B cell (primary cell): ENCODE measurements at regions of chr14 and their contacts with region 1.

Region 1: GRCh38 chr14:23478111-23478759 is 8.7 kb downstream of the NGDN start:
- DNase-seq: peak; percentile 79
- ATAC-seq: peak; percentile 73
- H3K4me3 ChIP-seq: no peak overlapping the region
- H3K4me3 Mint-ChIP-seq: no peak overlapping the region
- H3K27ac ChIP-seq: peak overlapping the region in 1 of 2 donors; percentile 4
- H3K27ac Mint-ChIP-seq: no peak overlapping the region
- H3K4me1 ChIP-seq: no peaks in the 10 kb centered on the region
- H3K4me1 Mint-ChIP-seq: no peaks in the 10 kb centered on the region
- H3K27me3 ChIP-seq: no peaks in the 10 kb centered on the region
- H3K27me3 Mint-ChIP-seq: no peaks in the 10 kb centered on the region
- CTCF ChIP-seq: peak; percentile 81

Region 2: DNA sequence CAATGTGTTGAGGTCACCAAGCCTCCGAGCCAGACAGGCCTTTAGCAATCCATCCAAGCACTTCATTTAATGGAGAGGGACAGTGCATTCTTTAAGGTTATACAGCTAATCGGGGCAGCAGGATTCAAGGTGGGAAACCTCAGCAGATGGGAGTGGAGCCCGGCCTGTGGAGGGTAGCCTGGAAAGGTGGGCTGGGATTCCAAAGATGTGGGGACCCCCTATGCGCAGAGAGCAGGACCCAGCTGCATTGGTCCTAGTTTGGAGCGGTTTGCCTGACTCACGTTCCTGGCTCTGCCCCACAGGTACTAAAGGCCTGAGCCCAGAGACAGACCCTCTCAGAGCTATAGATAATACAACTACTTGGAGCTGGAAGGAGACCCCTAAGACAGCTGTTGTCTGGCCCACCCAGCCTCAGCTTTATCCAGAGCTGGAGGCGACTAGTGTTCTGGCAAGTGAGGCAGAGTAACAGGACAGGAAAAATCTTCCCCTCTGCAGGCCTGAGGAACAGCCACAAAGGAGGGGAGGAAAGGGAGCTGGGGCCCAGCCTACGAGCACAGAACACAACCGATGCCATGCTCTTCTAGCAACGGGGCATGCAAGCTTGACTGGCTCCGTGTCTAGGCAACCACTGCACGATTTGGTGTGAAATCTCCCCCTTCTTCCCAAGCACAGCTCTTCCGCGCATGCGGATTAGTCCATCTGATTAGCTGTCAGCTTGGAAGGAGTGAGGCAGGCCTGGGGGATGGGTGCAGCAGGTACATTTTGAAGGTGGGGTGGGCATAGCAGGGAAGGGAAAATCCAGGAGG is 41.7 kb before region 1 on chr14:
- CTCF ChIA-PET with region 1: no interaction called
- POLR2A ChIA-PET with region 1: no interaction called
- intact Hi-C with region 1: no loop called
- DNase-seq: no peak
- ATAC-seq: no peak
- H3K4me3 ChIP-seq: no peak overlapping the region
- H3K4me3 Mint-ChIP-seq: no peak overlapping the region
- H3K27ac ChIP-seq: no peak overlapping the region
- H3K27ac Mint-ChIP-seq: no peak overlapping the region
- H3K4me1 ChIP-seq: no peaks in the 10 kb centered on the region
- H3K4me1 Mint-ChIP-seq: no peaks in the 10 kb centered on the region
- H3K27me3 ChIP-seq: peaks cover 0 to 3% (median under 1%) of the 10 kb centered on the region in 4 experiments
- H3K27me3 Mint-ChIP-seq: peaks cover 33% of the 10 kb centered on the region
- CTCF ChIP-seq: no peak

Region 3: DNA sequence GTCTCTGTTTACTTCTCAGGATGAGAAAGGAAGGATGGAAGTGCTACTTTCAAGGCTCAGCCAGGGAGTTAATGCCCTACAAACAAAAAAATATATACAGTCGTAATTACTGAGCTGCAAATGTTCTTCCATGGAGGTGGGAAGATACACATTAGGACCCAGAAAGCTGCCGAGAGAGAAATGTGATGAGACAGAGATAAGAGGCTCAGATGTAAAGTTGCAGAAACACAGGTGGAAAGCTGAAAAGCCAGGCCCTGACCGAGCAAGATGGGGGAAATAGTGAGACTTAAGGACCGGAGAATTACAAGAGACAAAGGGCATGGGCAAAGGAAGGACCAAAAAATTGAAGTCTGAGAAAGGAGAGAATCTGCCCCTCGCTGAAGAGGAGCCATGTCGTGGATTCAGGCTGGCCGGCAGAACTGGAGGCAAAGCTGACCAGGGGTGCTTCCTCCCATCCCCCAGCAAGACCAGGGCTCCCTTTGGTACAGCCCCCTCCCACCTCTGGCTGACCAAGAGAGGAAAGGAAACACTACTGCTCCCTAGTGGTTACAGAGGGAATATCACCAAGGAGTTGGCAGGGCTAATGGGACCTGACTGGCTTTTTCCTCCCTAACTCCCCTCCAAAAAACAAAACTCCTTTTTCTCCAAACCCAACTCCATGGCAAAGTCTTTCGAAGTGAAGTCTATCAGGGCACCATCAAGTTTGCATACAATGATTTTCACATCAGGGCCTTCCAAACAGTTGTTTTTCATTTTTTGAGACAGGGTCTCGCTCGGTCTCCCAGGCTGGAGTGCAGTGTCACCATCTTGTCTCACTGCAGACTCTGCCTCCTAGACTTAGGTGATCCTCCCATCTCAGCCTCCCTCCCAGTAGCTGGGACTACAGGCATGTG is 61.3 kb after region 1 on chr14:
- CTCF ChIA-PET with region 1: interaction called, 23 read pairs
- POLR2A ChIA-PET with region 1: no interaction called
- intact Hi-C with region 1: no loop called
- DNase-seq: peak; percentile 55
- ATAC-seq: peak; percentile 74
- H3K4me3 ChIP-seq: no peak overlapping the region
- H3K4me3 Mint-ChIP-seq: no peak overlapping the region
- H3K27ac ChIP-seq: no peak overlapping the region
- H3K27ac Mint-ChIP-seq: no peak overlapping the region
- H3K4me1 ChIP-seq: no peaks in the 10 kb centered on the region
- H3K4me1 Mint-ChIP-seq: no peaks in the 10 kb centered on the region
- H3K27me3 ChIP-seq: peaks cover 0 to 5% (median 0%) of the 10 kb centered on the region in 4 experiments
- H3K27me3 Mint-ChIP-seq: peaks cover 3% of the 10 kb centered on the region
- CTCF ChIP-seq: peak; percentile 78

Region 4: GRCh38 chr14:23555882-23556699 is 77.9 kb after region 1 on chr14 and contains the start of gene THTPA:
- CTCF ChIA-PET with region 1: interaction called, 335 read pairs
- POLR2A ChIA-PET with region 1: interaction called, 4 read pairs
- intact Hi-C with region 1: no loop called
- DNase-seq: peak; percentile 96
- ATAC-seq: peak; percentile 78
- H3K4me3 ChIP-seq: peak within 1 kb of the TSS; percentile 17 to 97 (median 81)
- H3K4me3 Mint-ChIP-seq: peak within 1 kb of the TSS; percentile 98
- H3K27ac ChIP-seq: peak within 1 kb of the TSS; percentile 69 to 84
- H3K27ac Mint-ChIP-seq: peak within 1 kb of the TSS; percentile 99
- H3K4me1 ChIP-seq: peaks cover 19 to 36% of the 10 kb centered on the region in 2 donors
- H3K4me1 Mint-ChIP-seq: peaks cover 45% of the 10 kb centered on the region
- H3K27me3 ChIP-seq: no peaks in the 10 kb centered on the region
- H3K27me3 Mint-ChIP-seq: no peaks in the 10 kb centered on the region
- CTCF ChIP-seq: no peak
- total RNA-seq, gene THTPA: 21.4 and 21.5 TPM in 2 replicates

Region 5: DNA sequence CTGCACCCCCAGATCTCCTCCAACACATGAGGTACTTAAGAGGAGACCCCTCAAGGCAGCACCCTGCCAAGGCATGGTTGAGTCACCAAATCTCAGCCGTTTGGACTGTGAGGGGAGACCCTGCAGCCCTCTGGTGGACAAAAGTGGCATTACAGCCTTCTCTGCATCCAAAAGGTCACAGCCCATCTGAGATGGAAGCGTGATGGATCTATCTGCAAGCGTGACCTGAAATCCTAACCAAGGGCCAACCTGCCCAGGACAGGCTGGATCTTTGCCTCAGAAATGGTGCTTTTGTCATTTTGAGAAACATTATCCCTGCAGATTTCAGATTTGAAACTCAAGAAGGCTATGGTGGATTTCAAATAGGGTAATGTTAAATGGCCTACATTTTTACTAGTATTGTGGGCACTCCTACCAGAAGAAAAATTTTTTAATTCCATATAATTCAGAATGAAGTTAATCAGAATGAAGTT is 451.6 kb after region 1 on chr14:
- CTCF ChIA-PET with region 1: interaction called, 5 read pairs
- POLR2A ChIA-PET with region 1: no interaction called
- intact Hi-C with region 1: loop called (anchors 5 kb)
- DNase-seq: peak; percentile 77
- ATAC-seq: peak; percentile 84
- H3K4me3 ChIP-seq: no peak overlapping the region
- H3K4me3 Mint-ChIP-seq: no peak overlapping the region
- H3K27ac ChIP-seq: no peak overlapping the region
- H3K27ac Mint-ChIP-seq: no peak overlapping the region
- H3K4me1 ChIP-seq: no peaks in the 10 kb centered on the region
- H3K4me1 Mint-ChIP-seq: no peaks in the 10 kb centered on the region
- H3K27me3 ChIP-seq: no peaks in the 10 kb centered on the region
- H3K27me3 Mint-ChIP-seq: peaks cover 5% of the 10 kb centered on the region
- CTCF ChIP-seq: peak; percentile 96

Region 6: GRCh38 chr14:23953464-23954278 is 475.4 kb after region 1 on chr14 and contains the start of gene DHRS4:
- CTCF ChIA-PET with region 1: no interaction called
- POLR2A ChIA-PET with region 1: no interaction called
- intact Hi-C with region 1: loop called (anchors 1 kb)
- DNase-seq: peak; percentile 83
- ATAC-seq: peak; percentile 94
- H3K4me3 ChIP-seq: peak within 1 kb of the TSS; percentile 32 to 97 (median 70)
- H3K4me3 Mint-ChIP-seq: peak within 1 kb of the TSS; percentile 97
- H3K27ac ChIP-seq: peak within 1 kb of the TSS; percentile 40 to 63
- H3K27ac Mint-ChIP-seq: peak within 1 kb of the TSS; percentile 90
- H3K4me1 ChIP-seq: peaks cover 7 to 16% of the 10 kb centered on the region in 2 donors
- H3K4me1 Mint-ChIP-seq: peaks cover 25% of the 10 kb centered on the region
- H3K27me3 ChIP-seq: no peaks in the 10 kb centered on the region
- H3K27me3 Mint-ChIP-seq: no peaks in the 10 kb centered on the region
- CTCF ChIP-seq: peak; percentile 88
- total RNA-seq, gene DHRS4: 15.3 and 15.6 TPM in 2 replicates